Endothelial cell of umbilical vein (primary cell): ENCODE measurements at regions of chr15 and their contacts with region 1.

Region 1: DNA sequence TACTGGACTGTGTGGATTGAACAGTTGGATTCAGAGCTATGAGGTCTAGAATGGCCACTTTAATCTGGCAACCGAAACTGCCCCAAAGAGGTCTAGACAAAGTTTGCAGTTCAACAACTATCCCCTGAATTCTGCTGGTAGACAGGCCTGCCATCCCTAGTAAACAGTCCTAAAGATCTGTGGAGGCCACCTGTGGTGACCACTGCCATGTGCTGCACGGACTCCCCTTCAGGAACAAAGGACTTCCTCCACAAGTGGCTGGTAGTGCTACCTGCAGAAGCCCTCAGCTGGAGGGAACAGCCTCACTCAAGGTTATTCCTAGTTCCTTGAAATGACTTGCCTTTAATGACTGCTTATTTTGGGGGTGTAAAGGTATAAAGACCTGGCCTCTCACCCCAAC is 6.1 kb downstream of the TNFAIP8L3 start:
- DNase-seq: no peak
- H3K4me3 ChIP-seq: no peak overlapping the region
- H3K27ac ChIP-seq: no peak overlapping the region
- H3K4me1 ChIP-seq: peaks cover 69% of the 10 kb centered on the region
- H3K27me3 ChIP-seq: no peaks in the 10 kb centered on the region
- CTCF ChIP-seq: no peak
- POLR2A ChIP-seq: no peak

Region 2: GRCh38 chr15:51077221-51078153 is 11.1 kb before region 1 on chr15:
- CTCF ChIA-PET with region 1: interaction called, 13 read pairs
- POLR2A ChIA-PET with region 1: no interaction called
- dilution Hi-C with region 1: no loop called
- intact Hi-C with region 1: loop called (anchors 1 kb)
- DNase-seq: peak; percentile 62
- H3K4me3 ChIP-seq: peak overlapping the region in 1 of 3 experiments; percentile 20
- H3K27ac ChIP-seq: peak overlapping the region; percentile 62
- H3K4me1 ChIP-seq: peaks cover 3% of the 10 kb centered on the region
- H3K27me3 ChIP-seq: no peaks in the 10 kb centered on the region
- CTCF ChIP-seq: no peak
- POLR2A ChIP-seq: peak; percentile 50

Region 3: DNA sequence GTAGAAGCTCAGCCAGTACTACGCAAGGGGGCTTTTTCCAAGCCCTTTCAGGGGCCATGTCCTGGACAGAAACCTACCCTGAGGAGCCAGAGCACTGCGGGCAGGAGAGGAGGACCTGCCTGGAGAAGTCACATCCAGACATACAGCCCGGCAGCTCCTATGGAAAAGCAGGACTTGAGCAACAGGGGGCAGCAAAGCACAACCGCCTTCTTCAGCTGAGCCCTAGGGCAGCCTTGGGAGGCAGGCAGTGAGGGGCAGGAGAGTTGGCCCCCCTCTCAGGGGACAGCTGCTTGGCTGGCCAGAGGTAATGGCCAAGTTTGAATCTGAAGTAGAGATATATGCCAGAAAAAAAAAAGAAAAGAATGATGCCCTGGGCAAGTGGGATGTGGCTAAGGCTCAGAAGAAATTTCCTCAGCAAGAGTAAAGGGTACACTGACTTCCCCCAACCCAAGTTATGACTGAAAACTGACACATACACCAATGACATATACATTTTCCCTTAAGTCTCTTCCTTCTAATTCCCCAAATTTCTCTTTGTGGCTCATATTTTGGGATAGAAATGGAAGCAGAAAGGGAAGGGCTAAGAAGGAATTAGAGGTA is 192.9 kb after region 1 on chr15:
- CTCF ChIA-PET with region 1: no interaction called
- POLR2A ChIA-PET with region 1: no interaction called
- dilution Hi-C with region 1: no loop called
- intact Hi-C with region 1: no loop called
- DNase-seq: peak; percentile 65
- H3K4me3 ChIP-seq: no peak overlapping the region
- H3K27ac ChIP-seq: no peak overlapping the region
- H3K4me1 ChIP-seq: no peaks in the 10 kb centered on the region
- H3K27me3 ChIP-seq: peaks cover 70 to 71% of the 10 kb centered on the region in 2 experiments
- CTCF ChIP-seq: peak; percentile 47 to 83
- POLR2A ChIP-seq: no peak